Activated B cell treated with CpG ODN at 0.5 μM for 24 hours (primary cell): ENCODE measurements at regions of chr9 and their contacts with region 1.

Region 1: GRCh38 chr9:134067904-134068743 is at the start of gene BRD3:
- DNase-seq: peak; percentile 83
- ATAC-seq: peak; percentile 84
- H3K4me3 Mint-ChIP-seq: peak within 1 kb of the TSS; percentile 85
- H3K27ac Mint-ChIP-seq: peak within 1 kb of the TSS; percentile 82
- H3K4me1 Mint-ChIP-seq: peaks cover 38% of the 10 kb centered on the region
- H3K27me3 Mint-ChIP-seq: peaks cover 12% of the 10 kb centered on the region
- CTCF ChIP-seq: no peak
- total RNA-seq, gene BRD3: 17.0 and 18.3 TPM in 2 replicates

Region 2: GRCh38 chr9:133335878-133336811 is 732.0 kb before region 1 on chr9 and contains the start of gene SURF6:
- CTCF ChIA-PET with region 1: no interaction called
- POLR2A ChIA-PET with region 1: no interaction called
- intact Hi-C with region 1: loop called (anchors 10 kb)
- DNase-seq: peak; percentile 94
- ATAC-seq: peak; percentile 93
- H3K4me3 Mint-ChIP-seq: peak within 1 kb of the TSS; percentile 97
- H3K27ac Mint-ChIP-seq: peak within 1 kb of the TSS; percentile 92
- H3K4me1 Mint-ChIP-seq: peaks cover 57% of the 10 kb centered on the region
- H3K27me3 Mint-ChIP-seq: no peaks in the 10 kb centered on the region
- CTCF ChIP-seq: no peak
- total RNA-seq, gene SURF6: 22.4 and 23.9 TPM in 2 replicates

Region 3: GRCh38 chr9:133592731-133593409 is 475.3 kb before region 1 on chr9:
- CTCF ChIA-PET with region 1: no interaction called
- POLR2A ChIA-PET with region 1: no interaction called
- intact Hi-C with region 1: no loop called
- DNase-seq: no peak
- ATAC-seq: no peak
- H3K4me3 Mint-ChIP-seq: no peak overlapping the region
- H3K27ac Mint-ChIP-seq: no peak overlapping the region
- H3K4me1 Mint-ChIP-seq: no peaks in the 10 kb centered on the region
- H3K27me3 Mint-ChIP-seq: no peaks in the 10 kb centered on the region
- CTCF ChIP-seq: no peak

Region 4: DNA sequence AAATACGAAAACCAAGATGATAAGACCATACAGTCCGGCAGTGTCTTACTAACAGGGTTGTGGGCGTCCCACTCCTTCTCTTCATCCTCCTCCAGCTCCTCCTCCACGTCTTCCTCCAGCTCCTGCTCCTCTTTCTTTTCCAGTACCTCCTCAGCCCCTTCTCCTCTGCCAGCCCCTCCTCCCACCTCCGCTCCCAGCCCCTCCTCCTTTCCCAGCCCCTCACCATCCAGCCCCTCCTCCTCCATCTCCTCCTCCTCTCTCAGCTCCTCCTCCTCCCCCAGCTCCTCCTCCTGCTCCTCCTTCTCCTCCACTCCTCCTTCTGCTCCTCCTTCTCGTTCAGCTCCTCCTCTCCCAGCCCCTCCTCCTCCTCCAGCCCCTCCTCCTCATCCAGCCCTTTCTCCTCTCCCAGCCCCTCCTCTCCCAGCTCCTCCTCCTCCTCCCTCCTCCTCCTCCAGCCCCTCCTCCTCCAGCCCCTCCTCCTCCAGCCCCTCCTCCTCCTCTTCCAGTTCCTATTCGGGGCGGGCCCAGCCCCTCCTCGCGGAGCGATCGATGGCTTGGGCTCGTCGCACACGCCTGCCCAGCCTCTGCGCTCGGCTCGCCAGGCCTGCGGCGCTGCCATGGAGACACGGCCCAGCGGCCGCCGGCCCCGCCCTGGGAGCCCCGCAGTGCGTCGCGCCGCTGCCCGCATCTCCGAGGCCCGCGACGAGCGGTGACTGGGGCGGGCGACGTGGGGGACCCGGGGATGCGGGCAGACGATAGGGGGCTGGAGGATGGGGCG is 43.1 kb before region 1 on chr9 and contains the start of gene BRD3OS:
- CTCF ChIA-PET with region 1: interaction called, 4 read pairs
- POLR2A ChIA-PET with region 1: interaction called, 9 read pairs
- intact Hi-C with region 1: loop called (anchors 1 kb)
- DNase-seq: peak; percentile 85
- ATAC-seq: peak; percentile 94
- H3K4me3 Mint-ChIP-seq: peak within 1 kb of the TSS; percentile 83
- H3K27ac Mint-ChIP-seq: peak within 1 kb of the TSS; percentile 61
- H3K4me1 Mint-ChIP-seq: peaks cover 16% of the 10 kb centered on the region
- H3K27me3 Mint-ChIP-seq: no peaks in the 10 kb centered on the region
- CTCF ChIP-seq: no peak
- total RNA-seq, gene BRD3OS: 17.3 and 19.3 TPM in 2 replicates

Region 5: GRCh38 chr9:134163353-134164196 is 95.5 kb after region 1 on chr9:
- CTCF ChIA-PET with region 1: no interaction called
- POLR2A ChIA-PET with region 1: no interaction called
- intact Hi-C with region 1: loop called (anchors 1 kb)
- DNase-seq: peak; percentile 64
- ATAC-seq: peak; percentile 18
- H3K4me3 Mint-ChIP-seq: no peak overlapping the region
- H3K27ac Mint-ChIP-seq: no peak overlapping the region
- H3K4me1 Mint-ChIP-seq: peaks cover 9% of the 10 kb centered on the region
- H3K27me3 Mint-ChIP-seq: no peaks in the 10 kb centered on the region
- CTCF ChIP-seq: no peak

Region 6: GRCh38 chr9:134399435-134400056 is 331.4 kb after region 1 on chr9:
- CTCF ChIA-PET with region 1: no interaction called
- POLR2A ChIA-PET with region 1: no interaction called
- intact Hi-C with region 1: loop called (anchors 5 kb)
- DNase-seq: no peak
- ATAC-seq: no peak
- H3K4me3 Mint-ChIP-seq: no peak overlapping the region
- H3K27ac Mint-ChIP-seq: no peak overlapping the region
- H3K4me1 Mint-ChIP-seq: peaks cover 47% of the 10 kb centered on the region
- H3K27me3 Mint-ChIP-seq: no peaks in the 10 kb centered on the region
- CTCF ChIP-seq: no peak

Region 7: DNA sequence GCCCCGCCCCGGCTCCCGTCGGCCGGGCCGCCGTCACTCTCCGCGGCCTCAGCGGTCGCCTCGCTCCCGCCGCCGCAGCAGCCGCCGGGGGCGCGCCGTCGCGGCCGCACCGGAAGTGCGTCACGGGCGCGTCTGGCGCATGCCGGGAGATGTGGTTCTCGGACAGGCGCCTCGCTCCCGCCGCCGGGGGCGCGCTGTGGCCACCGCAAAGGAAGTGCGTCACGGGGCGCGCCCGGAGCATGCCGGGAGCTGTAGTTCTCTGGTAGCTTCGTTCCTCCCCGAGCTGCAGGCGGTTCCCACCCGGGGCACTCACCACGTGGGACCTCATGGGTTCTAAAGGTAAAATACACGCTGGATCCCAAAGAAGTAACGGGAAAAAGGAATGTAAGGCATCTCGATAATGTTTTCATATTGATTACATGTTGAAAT is 1893.2 kb after region 1 on chr9 and contains the start of gene UBAC1:
- CTCF ChIA-PET with region 1: no interaction called
- POLR2A ChIA-PET with region 1: no interaction called
- intact Hi-C with region 1: loop called (anchors 10 kb)
- DNase-seq: peak; percentile 99
- ATAC-seq: peak; percentile 91
- H3K4me3 Mint-ChIP-seq: peak within 1 kb of the TSS; percentile 87
- H3K27ac Mint-ChIP-seq: peak within 1 kb of the TSS; percentile 76
- H3K4me1 Mint-ChIP-seq: peaks cover 29% of the 10 kb centered on the region
- H3K27me3 Mint-ChIP-seq: peaks cover 9% of the 10 kb centered on the region
- CTCF ChIP-seq: no peak
- total RNA-seq, gene UBAC1: 24.3 and 25.5 TPM in 2 replicates